Esophagus squamous epithelium (tissue), 5 donors: ENCODE measurements at regions of chr17 and their contacts with region 1.

Region 1: DNA sequence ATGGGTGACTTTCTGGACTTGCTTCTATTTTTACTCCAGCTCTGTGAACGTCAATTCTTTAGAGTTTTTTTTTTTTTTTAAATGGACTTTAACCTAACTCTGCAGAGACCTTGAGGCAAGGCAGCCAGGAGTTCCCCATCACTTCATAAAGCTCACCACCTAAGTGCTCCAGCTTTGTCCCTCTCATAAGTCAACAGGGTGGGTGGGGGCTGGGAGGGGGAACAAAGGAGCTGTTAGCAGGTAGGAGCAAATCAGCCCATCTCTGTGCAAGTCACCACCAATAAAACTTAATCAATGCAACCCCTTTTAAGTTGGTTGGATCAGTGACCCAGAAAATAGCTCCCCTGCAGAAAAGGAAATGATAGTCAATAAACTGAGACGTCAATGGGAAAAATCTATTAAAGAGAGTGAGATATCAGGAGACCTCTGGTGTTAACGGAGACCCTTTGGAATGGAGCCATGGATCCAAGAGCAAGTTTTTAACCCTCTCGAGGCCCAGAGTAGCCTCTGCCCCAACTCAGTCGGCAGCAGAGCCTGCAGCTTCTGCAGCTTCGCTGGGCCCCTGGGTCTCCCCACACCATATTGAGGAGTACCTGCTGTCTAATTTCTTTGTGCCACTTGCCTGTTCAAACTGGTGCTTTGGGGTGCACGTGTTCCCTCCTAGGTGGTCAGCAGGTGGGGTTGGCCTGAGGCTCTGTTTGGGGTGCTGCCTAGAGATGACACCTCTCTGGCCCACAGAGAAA is 27.6 kb upstream of the ETV4 start:
- DNase-seq: no peak
- H3K4me3 ChIP-seq: no peak overlapping the region
- H3K27ac ChIP-seq: no peak overlapping the region
- H3K4me1 ChIP-seq: peaks cover under 1 to 17% (median 5%) of the 10 kb centered on the region in 3 donors
- H3K27me3 ChIP-seq: no peaks in the 10 kb centered on the region
- CTCF ChIP-seq: no peak
- POLR2A ChIP-seq: no peak

Region 2: GRCh38 chr17:43483674-43484372 is 89.9 kb before region 1 on chr17 and contains the start of gene DHX8:
- intact Hi-C with region 1: no loop called
- DNase-seq: peak; percentile 88
- H3K4me3 ChIP-seq: peak within 1 kb of the TSS; percentile 65 to 83 (median 74)
- H3K27ac ChIP-seq: peak within 1 kb of the TSS; percentile 84 to 89 (median 87)
- H3K4me1 ChIP-seq: peaks cover 12 to 43% (median 20%) of the 10 kb centered on the region in 3 donors
- H3K27me3 ChIP-seq: no peaks in the 10 kb centered on the region
- CTCF ChIP-seq: peak; percentile 98 to 100 (median 100)
- POLR2A ChIP-seq: peak in 1 of 4 donors; percentile 65
- total RNA-seq, gene DHX8: 28.1 to 32.3 (median 31.0) TPM

Region 3: DNA sequence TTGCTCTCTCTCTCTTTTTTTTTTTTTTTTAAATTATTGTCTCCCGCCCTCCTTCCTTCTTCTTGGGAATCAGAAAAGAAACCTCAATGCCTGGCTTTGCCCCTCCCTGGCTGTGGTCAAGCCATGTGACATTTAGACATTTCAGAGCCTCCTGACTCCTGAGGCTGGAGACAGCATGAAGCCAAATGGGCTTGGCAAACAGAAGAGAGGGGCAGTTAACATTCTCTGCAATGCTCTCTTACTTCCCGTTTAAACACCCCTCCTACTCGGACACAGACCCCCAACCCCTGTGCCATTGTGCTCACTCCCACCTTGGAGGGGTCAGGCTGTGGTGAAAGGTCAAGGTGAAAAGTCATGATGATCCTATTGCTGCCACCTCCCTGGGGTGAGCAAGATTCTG is 102.7 kb after region 1 on chr17:
- intact Hi-C with region 1: loop called (anchors 2 kb)
- DNase-seq: no peak
- H3K4me3 ChIP-seq: no peak overlapping the region
- H3K27ac ChIP-seq: no peak overlapping the region
- H3K4me1 ChIP-seq: peaks cover 7 to 33% (median 17%) of the 10 kb centered on the region in 3 donors
- H3K27me3 ChIP-seq: peaks cover 0 to 9% (median 0%) of the 10 kb centered on the region in 4 donors
- CTCF ChIP-seq: no peak
- POLR2A ChIP-seq: no peak